ENCODE measurements at regions of chr11 and their contacts with region 1.

Region 1: DNA sequence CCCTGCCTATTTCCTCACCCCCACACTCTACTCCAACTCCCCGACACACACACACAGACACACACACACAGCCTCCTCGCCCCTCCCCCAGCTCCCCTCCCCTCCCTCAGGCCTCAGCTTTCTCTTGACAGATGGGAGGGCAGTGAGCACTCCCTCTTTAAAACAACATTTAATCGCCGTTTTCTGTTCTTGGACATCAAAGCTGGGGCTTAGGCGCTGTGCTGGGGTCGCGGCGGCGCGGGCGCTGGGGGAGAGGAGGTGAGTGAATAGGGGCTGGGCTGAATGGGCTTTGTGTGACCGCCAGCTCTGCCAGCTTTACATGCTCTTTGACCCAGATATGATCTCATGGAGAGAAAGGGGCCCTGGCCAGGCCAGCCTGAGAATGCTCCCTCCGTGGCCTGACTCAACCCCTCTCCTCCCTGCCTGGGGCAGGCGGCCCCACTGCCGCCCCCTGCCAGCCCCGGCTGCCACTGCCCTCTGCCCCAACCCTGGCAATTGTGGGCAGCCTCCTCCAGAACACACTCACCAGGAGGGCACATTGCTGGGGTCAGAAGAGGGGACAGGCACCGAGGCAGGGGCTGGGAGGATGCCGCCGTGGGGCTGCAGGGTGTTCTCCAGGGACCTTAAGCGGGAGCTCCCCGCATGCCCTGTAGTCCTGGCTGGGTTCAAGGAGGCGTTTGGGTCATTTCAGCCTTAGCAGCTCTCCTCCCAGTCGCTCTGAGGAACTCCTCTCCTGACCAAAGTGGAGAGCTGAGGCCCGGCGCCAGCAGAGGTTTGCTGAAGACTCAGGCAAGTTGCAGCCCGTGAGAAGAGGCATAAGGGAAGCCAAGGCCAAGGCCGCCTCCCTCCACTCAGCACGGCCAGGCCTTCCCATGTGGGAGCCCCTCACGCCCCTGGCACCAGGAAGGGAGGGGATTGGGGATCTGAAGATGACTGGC is 38.3 kb upstream of the NNMT start:
- DNase-seq: peak; percentile 66 to 76
- H3K4me3 ChIP-seq: peak overlapping the region in 2 of 3 donors; percentile 32
- H3K27ac ChIP-seq: peak overlapping the region; percentile 65 to 85
- H3K4me1 ChIP-seq: peaks cover 0 to 11% of the 10 kb centered on the region in 2 donors
- H3K27me3 ChIP-seq: no peaks in the 10 kb centered on the region
- CTCF ChIP-seq: peak in 1 of 3 donors; percentile 17
- POLR2A ChIP-seq: no peak

Region 2: GRCh38 chr11:113906038-113906437 is 351.9 kb before region 1 on chr11:
- intact Hi-C with region 1: loop called (anchors 10 kb)
- DNase-seq: no peak
- H3K4me3 ChIP-seq: no peak overlapping the region
- H3K27ac ChIP-seq: no peak overlapping the region
- H3K4me1 ChIP-seq: no peaks in the 10 kb centered on the region
- H3K27me3 ChIP-seq: peaks cover 0 to 12% of the 10 kb centered on the region in 2 donors
- CTCF ChIP-seq: peak in 1 of 3 donors; percentile 12
- POLR2A ChIP-seq: no peak

Region 3: DNA sequence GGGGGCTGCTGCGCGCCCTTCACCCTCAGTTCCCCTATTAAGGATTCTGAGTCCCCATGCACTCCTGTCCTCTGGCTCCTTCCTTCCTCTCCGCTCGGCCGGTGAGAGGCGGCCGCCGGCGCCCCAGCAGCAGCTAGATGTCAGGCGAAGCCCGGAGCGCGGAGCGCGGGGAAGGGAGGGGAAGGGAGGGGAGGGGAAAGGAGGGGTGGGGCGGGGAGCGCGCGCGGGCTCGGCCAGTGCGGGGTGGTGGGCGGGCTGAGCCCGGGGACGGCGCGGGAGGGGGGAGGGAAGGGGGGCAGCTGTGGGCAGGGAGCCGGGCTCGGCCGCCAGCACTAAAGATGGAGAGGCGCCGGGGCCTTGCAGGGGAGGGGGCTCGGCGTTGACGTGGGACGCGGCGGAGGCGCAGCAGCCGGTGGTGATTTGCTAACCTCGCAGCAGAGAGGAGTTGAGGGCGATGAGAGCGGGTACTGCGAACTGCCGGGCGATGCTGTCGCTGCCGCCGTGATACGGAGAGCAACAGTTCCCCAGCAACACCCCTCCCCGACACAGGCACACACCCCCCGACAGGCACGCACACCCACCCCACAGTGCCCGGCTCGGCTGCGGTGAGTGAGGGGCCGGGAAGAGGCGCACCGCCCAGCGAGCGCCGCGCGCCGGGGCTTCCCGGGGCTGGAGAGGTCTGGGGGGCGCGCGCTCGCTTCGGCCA is 198.5 kb before region 1 on chr11 and contains the start of gene ZBTB16:
- intact Hi-C with region 1: loop called (anchors 10 kb)
- DNase-seq: peak; percentile 81 to 90
- H3K4me3 ChIP-seq: peak within 1 kb of the TSS; percentile 85 to 100 (median 94)
- H3K27ac ChIP-seq: peak within 1 kb of the TSS; percentile 79 to 98
- H3K4me1 ChIP-seq: peaks cover 8 to 14% of the 10 kb centered on the region in 2 donors
- H3K27me3 ChIP-seq: no peaks in the 10 kb centered on the region
- CTCF ChIP-seq: no peak
- POLR2A ChIP-seq: peak; percentile 65
- total RNA-seq, gene ZBTB16: 236 to 358 (median 271) TPM

Region 4: GRCh38 chr11:114208377-114208776 is 49.5 kb before region 1 on chr11:
- intact Hi-C with region 1: loop called (anchors 10 kb)
- DNase-seq: no peak
- H3K4me3 ChIP-seq: no peak overlapping the region
- H3K27ac ChIP-seq: no peak overlapping the region
- H3K4me1 ChIP-seq: no peaks in the 10 kb centered on the region
- H3K27me3 ChIP-seq: no peaks in the 10 kb centered on the region
- CTCF ChIP-seq: no peak
- POLR2A ChIP-seq: no peak

Region 5: GRCh38 chr11:115817844-115818468 is 1560.1 kb after region 1 on chr11:
- intact Hi-C with region 1: no loop called
- DNase-seq: no peak
- H3K4me3 ChIP-seq: no peak overlapping the region
- H3K27ac ChIP-seq: no peak overlapping the region
- H3K4me1 ChIP-seq: no peaks in the 10 kb centered on the region
- H3K27me3 ChIP-seq: no peaks in the 10 kb centered on the region
- CTCF ChIP-seq: no peak
- POLR2A ChIP-seq: no peak